ENCODE measurements at regions of chr2 and their contacts with region 1.

Region 1: DNA sequence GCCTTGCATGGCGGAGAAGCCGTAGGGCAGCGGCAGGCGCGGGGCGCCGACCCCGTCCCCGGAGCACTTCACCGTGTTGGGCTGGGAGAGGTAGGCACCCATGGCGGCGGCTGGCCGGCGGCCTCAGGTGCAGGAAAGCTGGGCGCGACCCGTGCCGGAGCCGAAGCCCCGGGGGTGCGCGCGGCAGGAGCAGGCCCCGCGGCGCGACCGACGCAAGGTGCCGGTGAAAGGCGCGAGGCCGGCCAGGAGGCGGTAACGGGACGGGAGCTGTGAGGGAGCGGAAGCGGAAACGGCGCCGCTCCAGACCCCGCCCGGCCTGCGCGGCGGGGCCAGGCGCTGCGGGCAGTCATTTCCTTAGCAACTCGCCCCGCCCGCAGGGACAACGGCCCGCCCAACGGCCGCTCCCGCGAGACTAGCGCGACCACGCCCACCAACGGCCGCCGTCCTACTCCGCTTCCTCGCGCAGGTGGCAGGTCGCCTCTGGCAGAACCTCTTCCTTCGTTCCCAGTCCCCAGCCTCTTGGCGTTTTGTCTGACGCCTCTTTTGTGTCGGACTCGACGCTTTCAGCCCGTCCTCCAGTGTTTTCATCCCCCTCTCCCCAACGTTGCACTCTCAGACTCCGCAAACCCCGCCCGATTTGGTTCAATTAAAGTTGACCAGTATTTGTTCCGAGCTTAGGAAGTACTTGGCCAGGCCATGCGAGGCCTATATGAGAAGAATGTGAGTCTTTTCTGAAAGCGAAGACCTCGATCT is at the start of gene PPM1G:
- DNase-seq: peak; percentile 96
- H3K4me3 ChIP-seq: peak within 1 kb of the TSS; percentile 71 to 100 (median 91)
- H3K27ac ChIP-seq: peak within 1 kb of the TSS; percentile 84 to 91 (median 87)
- H3K4me1 ChIP-seq: peaks cover 24 to 35% (median 29%) of the 10 kb centered on the region in 4 donors
- H3K27me3 ChIP-seq: no peaks in the 10 kb centered on the region
- CTCF ChIP-seq: peak in 1 of 3 experiments; percentile 4
- EP300 ChIP-seq: no peak
- POLR2A ChIP-seq: no peak
- total RNA-seq, gene PPM1G: 46.1 to 71.8 (median 62.7) TPM

Region 2: GRCh38 chr2:27428213-27428977 is 18.9 kb after region 1 on chr2 and contains the start of gene NRBP1:
- intact Hi-C with region 1: loop called (anchors 2 kb)
- DNase-seq: peak; percentile 98
- H3K4me3 ChIP-seq: peak within 1 kb of the TSS; percentile 97 to 100 (median 98)
- H3K27ac ChIP-seq: peak within 1 kb of the TSS; percentile 99 to 100 (median 99)
- H3K4me1 ChIP-seq: peaks cover 35 to 51% (median 46%) of the 10 kb centered on the region in 4 donors
- H3K27me3 ChIP-seq: no peaks in the 10 kb centered on the region
- CTCF ChIP-seq: no peak
- EP300 ChIP-seq: no peak
- POLR2A ChIP-seq: peak; percentile 94
- total RNA-seq, gene NRBP1: 74.8 to 96.0 (median 85.8) TPM

Region 3: GRCh38 chr2:27509326-27509725 is 99.8 kb after region 1 on chr2:
- intact Hi-C with region 1: no loop called
- DNase-seq: no peak
- H3K4me3 ChIP-seq: no peak overlapping the region
- H3K27ac ChIP-seq: no peak overlapping the region
- H3K4me1 ChIP-seq: no peaks in the 10 kb centered on the region
- H3K27me3 ChIP-seq: peaks cover 0 to 7% (median 0%) of the 10 kb centered on the region in 4 donors
- CTCF ChIP-seq: no peak
- EP300 ChIP-seq: no peak
- POLR2A ChIP-seq: no peak

Measured in esophagus muscularis mucosa (tissue), 4 donors.